Activated CD4-positive, alpha-beta T cell treated with anti-CD3 and anti-CD28 coated beads, Interleukin-2, amount 10 ng/mL, durations not matched to agents 24 days and 14 days (primary cell): ENCODE measurements at regions of chr3 and their contacts with region 1.

Region 1: GRCh38 chr3:46372492-46373359 is 2.0 kb downstream of the CCR5 start:
- DNase-seq: peak; percentile 82
- H3K4me3 Mint-ChIP-seq: peak overlapping the region; percentile 36
- H3K27ac Mint-ChIP-seq: peak overlapping the region; percentile 57
- H3K4me1 Mint-ChIP-seq: peaks cover 67% of the 10 kb centered on the region
- H3K27me3 Mint-ChIP-seq: peaks cover 32% of the 10 kb centered on the region

Region 2: GRCh38 chr3:46078712-46079400 is 293.9 kb before region 1 on chr3:
- intact Hi-C with region 1: loop called (anchors 2 kb)
- DNase-seq: peak; percentile 97
- H3K4me3 Mint-ChIP-seq: peak overlapping the region; percentile 51
- H3K27ac Mint-ChIP-seq: no peak overlapping the region
- H3K4me1 Mint-ChIP-seq: peaks cover 35% of the 10 kb centered on the region
- H3K27me3 Mint-ChIP-seq: peaks cover 18% of the 10 kb centered on the region

Region 3: GRCh38 chr3:46208167-46208704 is 164.5 kb before region 1 on chr3 and contains the start of gene CCR1:
- intact Hi-C with region 1: loop called (anchors 2 kb)
- DNase-seq: peak; percentile 89
- H3K4me3 Mint-ChIP-seq: peak within 1 kb of the TSS; percentile 73
- H3K27ac Mint-ChIP-seq: peak within 1 kb of the TSS; percentile 74
- H3K4me1 Mint-ChIP-seq: peaks cover 56% of the 10 kb centered on the region
- H3K27me3 Mint-ChIP-seq: peaks cover 2% of the 10 kb centered on the region
- total RNA-seq, gene CCR1: 5.9 and 6.7 TPM in 2 replicates

Region 4: DNA sequence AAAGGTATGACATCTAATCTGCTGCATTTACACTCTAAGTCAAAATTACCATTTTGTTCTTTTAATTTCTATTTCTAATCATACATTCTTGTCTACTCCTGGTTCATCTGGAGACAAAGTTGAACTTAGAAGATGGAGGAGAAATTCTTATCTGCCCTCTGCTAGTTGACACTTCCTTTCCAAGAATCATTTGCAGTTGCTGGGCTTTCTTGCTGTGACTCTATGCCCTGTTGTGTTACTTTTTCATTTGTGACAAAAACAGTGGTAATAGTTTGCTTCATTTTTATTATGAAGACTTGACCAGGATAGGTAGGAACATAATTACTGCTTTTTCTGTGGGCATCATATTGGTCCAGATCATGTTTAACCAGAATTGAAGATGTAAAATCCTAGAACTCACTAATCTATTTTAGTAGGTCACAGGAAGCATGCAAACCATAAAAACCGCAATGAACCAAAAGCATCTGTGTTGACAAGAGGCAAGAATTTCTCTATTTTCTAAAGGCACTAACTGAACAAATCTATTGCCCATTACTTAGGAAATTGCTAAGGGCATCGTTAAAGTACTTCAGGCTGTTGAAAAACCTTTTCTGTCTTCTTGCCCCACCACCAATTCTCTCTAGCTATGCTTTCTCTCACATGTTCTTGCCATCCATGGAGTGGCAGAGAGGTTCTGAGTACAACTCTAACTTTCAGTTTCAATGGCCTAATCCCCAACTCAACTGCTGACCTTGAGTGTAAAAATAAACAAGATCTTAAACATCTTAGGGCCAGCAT is 23.1 kb before region 1 on chr3:
- intact Hi-C with region 1: loop called (anchors 1 kb)
- DNase-seq: peak; percentile 77
- H3K4me3 Mint-ChIP-seq: peak overlapping the region; percentile 68
- H3K27ac Mint-ChIP-seq: peak overlapping the region; percentile 82
- H3K4me1 Mint-ChIP-seq: peaks cover 64% of the 10 kb centered on the region
- H3K27me3 Mint-ChIP-seq: peaks cover 25% of the 10 kb centered on the region